ENCODE measurements at regions of chr2 and their contacts with region 1.

Region 1: DNA sequence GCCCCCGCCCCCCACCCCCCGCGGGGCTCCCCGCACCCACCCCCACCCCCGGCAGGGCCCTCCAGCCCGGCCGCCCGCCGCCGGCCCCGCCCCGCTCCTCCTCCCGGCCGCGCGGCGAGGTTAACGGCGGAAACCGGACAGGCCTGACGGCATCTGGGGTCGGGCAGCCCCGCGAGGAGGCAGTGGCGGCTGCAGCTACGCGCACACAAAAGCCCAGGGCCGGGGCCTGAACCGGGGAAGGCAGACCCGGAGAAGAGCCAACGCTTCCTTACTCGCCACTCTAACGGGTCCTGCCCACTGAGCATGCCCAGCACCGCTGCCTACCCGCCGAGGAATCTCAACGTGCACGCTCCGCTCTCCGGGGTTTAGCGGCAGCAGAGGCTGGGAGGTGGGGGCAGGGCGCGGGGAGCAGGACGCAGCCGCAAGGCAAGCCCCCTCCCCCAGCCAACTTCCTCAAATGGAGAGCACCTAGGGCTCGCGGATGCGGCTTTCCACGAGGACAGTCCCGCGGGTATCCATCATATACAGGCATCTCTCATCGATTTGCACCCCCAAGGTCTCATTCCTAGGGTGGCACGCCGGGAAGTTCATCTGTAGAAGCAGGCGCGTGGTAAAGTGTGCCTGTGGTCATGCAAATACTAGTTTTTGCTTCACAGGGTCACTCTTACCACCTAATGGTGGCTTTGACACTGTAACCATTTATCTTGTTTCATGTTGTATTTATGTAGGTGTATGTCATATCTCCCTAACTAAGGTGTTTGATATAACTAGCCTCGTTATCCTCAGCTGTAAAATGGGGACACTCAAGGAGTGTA is at the start of gene MEMO1:
- DNase-seq: peak; percentile 97
- ATAC-seq: peak; percentile 82
- H3K4me3 Mint-ChIP-seq: peak within 1 kb of the TSS; percentile 94
- H3K27ac Mint-ChIP-seq: peak within 1 kb of the TSS; percentile 98
- H3K4me1 Mint-ChIP-seq: peaks cover 32% of the 10 kb centered on the region
- H3K27me3 Mint-ChIP-seq: no peaks in the 10 kb centered on the region
- total RNA-seq, gene MEMO1: 49.8 to 53.5 TPM

Region 2: DNA sequence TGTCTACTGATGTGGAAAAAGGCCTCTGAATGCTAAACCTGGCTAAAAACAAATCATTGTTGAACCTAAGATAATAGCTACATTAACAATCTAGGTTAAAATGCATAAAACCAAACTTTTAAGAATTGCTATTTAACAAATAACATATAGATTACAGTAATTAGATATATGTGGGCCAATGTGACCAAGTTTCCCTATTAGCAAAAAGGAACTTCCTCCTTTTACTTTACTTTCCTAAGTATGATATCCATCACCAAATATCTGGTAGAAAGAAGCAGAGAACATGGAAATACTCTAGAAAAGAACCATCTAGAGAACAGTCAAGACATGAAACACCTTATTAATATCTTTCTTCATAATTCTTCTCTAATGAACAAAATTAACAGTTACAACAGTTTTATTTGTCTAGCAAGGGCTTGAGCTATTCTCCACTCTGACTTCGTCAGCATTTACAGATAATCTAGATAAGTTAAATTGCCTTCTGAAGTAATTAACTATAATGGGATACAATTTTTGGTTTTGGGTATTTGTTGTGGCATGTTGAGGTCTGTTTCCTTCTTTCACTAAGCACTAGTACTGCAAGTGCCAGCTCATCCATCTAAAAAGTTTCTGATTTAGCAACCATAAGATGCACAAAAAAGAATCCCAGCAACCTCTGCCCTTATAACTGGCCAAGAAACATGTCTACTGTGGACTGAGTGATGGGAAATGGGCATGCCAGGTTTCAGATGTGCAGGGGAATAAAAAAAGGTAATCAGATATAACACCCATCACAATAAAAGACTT is 53.3 kb before region 1 on chr2:
- CTCF ChIA-PET with region 1: interaction called, 3 read pairs
- POLR2A ChIA-PET with region 1: no interaction called
- intact Hi-C with region 1: loop called in 1 of 2 experiments (anchors 5 kb)
- DNase-seq: no peak
- ATAC-seq: peak; percentile 55
- H3K4me3 Mint-ChIP-seq: no peak overlapping the region
- H3K27ac Mint-ChIP-seq: peak overlapping the region; percentile 59
- H3K4me1 Mint-ChIP-seq: peaks cover 62% of the 10 kb centered on the region
- H3K27me3 Mint-ChIP-seq: no peaks in the 10 kb centered on the region

Region 3: GRCh38 chr2:31967790-31968189 is 43.1 kb before region 1 on chr2:
- CTCF ChIA-PET with region 1: no interaction called
- POLR2A ChIA-PET with region 1: no interaction called
- intact Hi-C with region 1: no loop called
- DNase-seq: no peak
- ATAC-seq: no peak
- H3K4me3 Mint-ChIP-seq: no peak overlapping the region
- H3K27ac Mint-ChIP-seq: no peak overlapping the region
- H3K4me1 Mint-ChIP-seq: peaks cover 22% of the 10 kb centered on the region
- H3K27me3 Mint-ChIP-seq: no peaks in the 10 kb centered on the region

Region 4: GRCh38 chr2:32039447-32040219 is 28.8 kb after region 1 on chr2 and contains the start of gene DPY30:
- CTCF ChIA-PET with region 1: interaction called, 4 read pairs
- POLR2A ChIA-PET with region 1: interaction called, 7 read pairs
- intact Hi-C with region 1: loop called (anchors 1 to 2 kb)
- DNase-seq: peak; percentile 95
- ATAC-seq: peak; percentile 94
- H3K4me3 Mint-ChIP-seq: peak within 1 kb of the TSS; percentile 90
- H3K27ac Mint-ChIP-seq: peak within 1 kb of the TSS; percentile 96
- H3K4me1 Mint-ChIP-seq: peaks cover 11% of the 10 kb centered on the region
- H3K27me3 Mint-ChIP-seq: no peaks in the 10 kb centered on the region
- total RNA-seq, gene DPY30: 74.2 to 78.6 TPM

Region 5: GRCh38 chr2:32168513-32168912 is 157.6 kb after region 1 on chr2:
- CTCF ChIA-PET with region 1: no interaction called
- POLR2A ChIA-PET with region 1: interaction called, 7 read pairs
- intact Hi-C with region 1: loop called (anchors 1 to 5 kb)
- DNase-seq: no peak
- ATAC-seq: no peak
- H3K4me3 Mint-ChIP-seq: no peak overlapping the region
- H3K27ac Mint-ChIP-seq: peak overlapping the region; percentile 38
- H3K4me1 Mint-ChIP-seq: peaks cover 39% of the 10 kb centered on the region
- H3K27me3 Mint-ChIP-seq: no peaks in the 10 kb centered on the region

Region 6: GRCh38 chr2:32356735-32357644 is 346.1 kb after region 1 on chr2 and contains the start of gene BIRC6:
- CTCF ChIA-PET with region 1: no interaction called
- POLR2A ChIA-PET with region 1: no interaction called
- intact Hi-C with region 1: loop called (anchors 1 to 10 kb)
- DNase-seq: peak; percentile 98
- ATAC-seq: peak; percentile 94
- H3K4me3 Mint-ChIP-seq: peak within 1 kb of the TSS; percentile 78
- H3K27ac Mint-ChIP-seq: peak within 1 kb of the TSS; percentile 93
- H3K4me1 Mint-ChIP-seq: peaks cover 37% of the 10 kb centered on the region
- H3K27me3 Mint-ChIP-seq: no peaks in the 10 kb centered on the region
- total RNA-seq, gene BIRC6: 66.1 to 70.1 TPM